ENCODE measurements at regions of chr5 and their contacts with region 1.

Region 1: GRCh38 chr5:154940772-154941620 is at the start of gene MRPL22:
- DNase-seq: peak; percentile 92
- H3K4me3 ChIP-seq: peak within 1 kb of the TSS; percentile 71
- H3K27ac ChIP-seq: peak within 1 kb of the TSS; percentile 71
- H3K4me1 ChIP-seq: peaks cover 18% of the 10 kb centered on the region
- H3K27me3 ChIP-seq: no peaks in the 10 kb centered on the region
- CTCF ChIP-seq: no peak
- total RNA-seq, gene MRPL22: 143 and 147 TPM in 2 replicates

Region 2: DNA sequence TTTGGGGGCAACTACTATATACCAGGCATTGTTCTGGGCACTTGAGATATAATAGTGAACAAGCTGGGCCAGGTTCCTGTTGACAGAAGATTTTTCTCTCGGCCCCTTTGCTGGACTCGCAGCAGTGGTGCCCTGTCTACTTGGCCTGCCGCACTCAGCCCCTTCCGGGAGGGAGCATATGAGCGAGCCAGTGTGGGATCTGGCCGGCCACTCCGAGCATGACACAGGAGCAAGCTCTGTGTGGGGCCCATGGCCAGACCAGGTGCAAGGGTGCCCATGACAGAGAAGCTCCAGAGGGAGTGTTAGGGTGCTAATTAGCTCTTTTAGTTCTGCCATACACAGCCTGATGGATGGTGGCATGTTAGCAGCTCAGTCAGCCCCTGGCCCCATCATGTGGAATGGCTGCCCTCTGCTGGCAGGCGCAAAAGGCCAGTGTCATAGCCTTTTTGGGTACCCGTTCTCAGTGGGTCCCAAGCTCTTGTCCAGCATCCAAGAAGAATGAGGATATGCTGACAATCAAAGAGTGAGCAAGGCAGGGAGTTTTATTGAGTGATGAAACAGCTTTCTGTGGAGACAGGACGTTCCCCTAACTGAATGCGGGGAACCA is 63.2 kb after region 1 on chr5:
- CTCF ChIA-PET with region 1: no interaction called
- POLR2A ChIA-PET with region 1: no interaction called
- intact Hi-C with region 1: loop called (anchors 5 kb)
- DNase-seq: peak; percentile 48
- H3K4me3 ChIP-seq: no peak overlapping the region
- H3K27ac ChIP-seq: no peak overlapping the region
- H3K4me1 ChIP-seq: no peaks in the 10 kb centered on the region
- H3K27me3 ChIP-seq: no peaks in the 10 kb centered on the region
- CTCF ChIP-seq: peak; percentile 62

Measured in A673 (cell line).